Common myeloid progenitor, CD34-positive (primary cell): ENCODE measurements at regions of chr7 and their contacts with region 1.

Region 1: DNA sequence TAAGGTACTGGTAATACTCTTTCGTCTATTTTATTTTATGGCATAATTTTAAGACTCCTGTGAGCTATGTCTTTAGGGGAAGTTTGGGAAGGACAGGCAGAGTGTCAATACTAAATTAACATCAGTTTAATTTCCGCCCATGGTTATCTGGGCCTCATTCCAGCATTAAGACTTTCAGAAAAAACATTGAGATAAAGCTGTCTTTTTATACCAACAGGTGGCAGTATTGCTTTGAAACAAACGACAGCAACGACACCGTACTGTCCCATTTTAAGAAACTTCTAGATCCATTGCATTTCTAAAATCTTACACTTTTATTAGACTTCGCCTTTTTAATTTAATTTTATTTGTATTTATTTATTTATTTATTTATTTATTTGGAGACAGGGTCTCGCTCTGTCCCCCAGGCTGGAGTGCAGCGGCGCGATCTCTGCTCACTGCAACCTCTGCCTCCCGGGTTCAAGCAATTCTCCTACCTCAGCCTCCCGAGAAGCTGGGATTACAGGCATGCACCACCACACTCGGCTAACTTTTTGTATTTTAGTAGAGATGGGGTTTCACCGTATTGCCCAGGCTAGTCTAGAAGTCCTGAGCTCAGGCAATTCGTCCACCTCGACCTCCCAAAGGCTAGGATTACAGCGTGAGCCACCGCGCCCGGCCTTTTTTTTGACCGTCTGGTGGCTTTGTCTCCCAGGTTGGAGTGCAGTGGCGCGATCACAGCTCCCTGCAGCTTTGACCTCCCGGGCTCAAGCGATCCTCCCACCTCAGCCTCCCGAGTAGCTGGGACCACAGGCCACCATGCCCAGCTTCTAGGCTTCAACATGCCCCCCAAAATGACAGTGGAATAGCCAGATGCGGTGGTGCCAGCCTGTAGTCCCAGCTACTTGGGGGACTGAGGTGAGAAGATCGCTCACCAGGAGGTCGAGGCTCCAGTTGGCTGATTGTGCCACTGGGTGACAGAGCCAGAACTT is 78.7 kb upstream of the C1GALT1 start:
- DNase-seq: peak; percentile 71 to 79 (median 79)
- H3K4me3 ChIP-seq: peak overlapping the region in 1 of 7 experiments; percentile 24
- H3K27ac ChIP-seq: peak overlapping the region in 1 of 2 experiments; percentile 46
- H3K4me1 ChIP-seq: peaks cover 0 to 15% (median 2%) of the 10 kb centered on the region in 4 experiments
- H3K27me3 ChIP-seq: no peaks in the 10 kb centered on the region

Region 2: GRCh38 chr7:7182156-7183060 is 78.8 kb after region 1 on chr7 and contains the start of gene C1GALT1:
- CTCF ChIA-PET with region 1: interaction called, 10 read pairs
- POLR2A ChIA-PET with region 1: no interaction called
- DNase-seq: peak; percentile 99 to 100 (median 100)
- H3K4me3 ChIP-seq: peak within 1 kb of the TSS; percentile 79 to 95 (median 90)
- H3K27ac ChIP-seq: peak within 1 kb of the TSS; percentile 66 to 88
- H3K4me1 ChIP-seq: peaks cover 10 to 35% (median 29%) of the 10 kb centered on the region in 4 experiments
- H3K27me3 ChIP-seq: no peaks in the 10 kb centered on the region

Region 3: DNA sequence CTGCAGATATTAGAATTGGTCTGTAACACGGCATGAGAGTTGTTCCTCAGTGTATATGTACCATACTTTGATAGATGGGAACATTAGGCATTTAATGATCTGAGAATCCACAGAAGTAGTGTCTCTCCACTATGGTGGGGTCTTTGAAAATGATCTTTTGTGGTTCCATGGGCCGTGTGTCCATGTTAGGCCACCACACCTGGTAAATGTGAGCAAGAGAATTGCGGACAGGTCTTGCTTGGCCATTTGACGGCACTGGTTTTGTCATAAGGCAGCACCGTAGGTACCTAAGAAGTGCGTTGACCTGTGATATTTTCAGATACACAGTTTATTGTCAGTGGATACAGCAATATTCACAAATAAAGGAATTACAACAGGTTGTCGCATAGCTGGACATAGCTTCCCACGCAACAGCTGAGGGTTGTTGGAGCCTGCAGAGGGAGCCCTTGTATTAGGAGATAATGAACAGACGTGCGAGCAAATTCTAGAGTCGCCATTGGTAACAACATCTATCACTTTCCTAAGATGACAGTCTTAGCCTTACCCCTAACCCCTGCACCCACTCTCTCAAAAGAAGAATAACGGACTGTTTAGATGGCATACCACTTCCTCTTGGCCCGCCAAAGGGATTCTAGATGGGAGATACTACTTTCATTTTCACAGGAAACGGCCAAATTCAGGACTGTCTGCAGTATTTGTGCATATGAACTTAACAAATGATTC is 320.7 kb after region 1 on chr7:
- CTCF ChIA-PET with region 1: interaction called, 10 read pairs
- POLR2A ChIA-PET with region 1: no interaction called
- DNase-seq: peak; percentile 63 to 81 (median 81)
- H3K4me3 ChIP-seq: peak overlapping the region in 6 of 7 experiments; percentile 15 to 81 (median 68)
- H3K27ac ChIP-seq: peak overlapping the region; percentile 21
- H3K4me1 ChIP-seq: peaks cover 0 to 10% (median 2%) of the 10 kb centered on the region in 4 experiments
- H3K27me3 ChIP-seq: no peaks in the 10 kb centered on the region

Region 4: DNA sequence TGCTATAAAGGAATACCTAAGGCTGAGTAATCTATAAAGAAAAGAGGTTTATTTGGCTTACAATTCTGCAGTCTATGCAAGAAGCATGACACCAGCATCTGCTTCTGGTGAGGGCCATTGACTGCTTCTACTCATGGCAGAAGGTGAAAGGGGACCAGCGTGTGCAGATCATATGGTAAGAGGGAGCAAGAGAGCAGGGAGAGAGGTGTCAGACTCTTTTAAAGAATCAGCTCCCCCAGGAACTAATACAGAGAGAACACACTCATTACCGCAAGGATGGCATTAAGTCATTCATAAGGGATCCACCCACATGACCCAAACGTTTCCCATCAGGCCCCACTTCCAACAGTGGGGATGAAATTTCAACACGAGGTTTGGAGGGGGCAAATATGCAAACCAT is 435.5 kb after region 1 on chr7:
- CTCF ChIA-PET with region 1: interaction called, 13 read pairs
- POLR2A ChIA-PET with region 1: no interaction called
- DNase-seq: no peak
- H3K4me3 ChIP-seq: no peak overlapping the region
- H3K27ac ChIP-seq: no peak overlapping the region
- H3K4me1 ChIP-seq: no peaks in the 10 kb centered on the region
- H3K27me3 ChIP-seq: no peaks in the 10 kb centered on the region

Region 5: GRCh38 chr7:8232999-8233847 is 1129.6 kb after region 1 on chr7:
- CTCF ChIA-PET with region 1: no interaction called
- POLR2A ChIA-PET with region 1: interaction called, 10 read pairs
- DNase-seq: peak in 2 of 3 donors; percentile 26 to 58
- H3K4me3 ChIP-seq: no peak overlapping the region
- H3K27ac ChIP-seq: peak overlapping the region in 1 of 2 experiments; percentile 44
- H3K4me1 ChIP-seq: no peaks in the 10 kb centered on the region
- H3K27me3 ChIP-seq: no peaks in the 10 kb centered on the region